CD14-positive monocyte (primary cell): ENCODE measurements at regions of chr17 and their contacts with region 1.

Region 1: DNA sequence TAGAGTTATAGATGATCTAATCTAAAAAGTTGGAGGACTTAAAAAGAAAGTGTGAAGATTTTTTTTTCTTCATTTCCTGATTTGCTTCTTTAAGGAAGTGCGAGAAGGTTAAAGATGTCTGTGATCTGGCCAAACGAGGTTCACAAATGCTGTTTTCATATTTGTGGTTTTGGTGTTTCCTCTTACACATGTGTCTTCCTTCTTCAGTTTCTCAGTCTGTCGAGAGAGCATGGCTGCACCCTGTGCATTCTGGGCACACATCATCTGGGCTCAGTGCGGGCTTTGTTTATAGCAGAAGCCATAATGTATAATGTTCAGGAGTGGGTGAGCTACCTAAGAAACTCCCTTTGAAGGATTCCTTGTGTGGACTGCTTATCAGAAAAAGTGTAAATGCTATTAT is 260.4 kb upstream of the TBX2 start:
- DNase-seq: peak; percentile 69 to 80 (median 74)
- H3K4me3 ChIP-seq: peak overlapping the region in 1 of 3 experiments; percentile 19
- H3K4me3 Mint-ChIP-seq: peak overlapping the region in 1 of 2 donors; percentile 70
- H3K27ac ChIP-seq: peak overlapping the region in 1 of 2 donors; percentile 5
- H3K27ac Mint-ChIP-seq: peak overlapping the region; percentile 3 to 88 (median 65)
- H3K4me1 ChIP-seq: peaks cover 15 to 21% of the 10 kb centered on the region in 2 donors
- H3K4me1 Mint-ChIP-seq: peaks cover 28% of the 10 kb centered on the region
- H3K27me3 ChIP-seq: no peaks in the 10 kb centered on the region
- H3K27me3 Mint-ChIP-seq: peaks cover 0 to 2% (median 2%) of the 10 kb centered on the region in 3 donors
- CTCF ChIP-seq: no peak

Region 2: GRCh38 chr17:61251939-61252896 is 113.0 kb after region 1 on chr17:
- intact Hi-C with region 1: loop called in 1 of 2 experiments (anchors 5 kb)
- DNase-seq: peak; percentile 88 to 93 (median 90)
- H3K4me3 ChIP-seq: peak overlapping the region in 1 of 3 experiments; percentile 43
- H3K4me3 Mint-ChIP-seq: peak overlapping the region in 1 of 2 donors; percentile 67
- H3K27ac ChIP-seq: peak overlapping the region; percentile 89 to 90
- H3K27ac Mint-ChIP-seq: peak overlapping the region; percentile 94 to 98 (median 95)
- H3K4me1 ChIP-seq: peaks cover 49 to 54% of the 10 kb centered on the region in 2 donors
- H3K4me1 Mint-ChIP-seq: peaks cover 60% of the 10 kb centered on the region
- H3K27me3 ChIP-seq: no peaks in the 10 kb centered on the region
- H3K27me3 Mint-ChIP-seq: peaks cover 0 to 4% (median 0%) of the 10 kb centered on the region in 3 donors
- CTCF ChIP-seq: no peak